ENCODE measurements at regions of chr1 and their contacts with region 1.

Region 1: GRCh38 chr1:39129514-39129913 is 75.0 kb upstream of the MACF1 start:
- DNase-seq: peak; percentile 12
- H3K4me3 Mint-ChIP-seq: no peak overlapping the region
- H3K27ac Mint-ChIP-seq: no peak overlapping the region
- H3K4me1 Mint-ChIP-seq: peaks cover 3% of the 10 kb centered on the region
- H3K27me3 Mint-ChIP-seq: peaks cover 2% of the 10 kb centered on the region

Region 2: DNA sequence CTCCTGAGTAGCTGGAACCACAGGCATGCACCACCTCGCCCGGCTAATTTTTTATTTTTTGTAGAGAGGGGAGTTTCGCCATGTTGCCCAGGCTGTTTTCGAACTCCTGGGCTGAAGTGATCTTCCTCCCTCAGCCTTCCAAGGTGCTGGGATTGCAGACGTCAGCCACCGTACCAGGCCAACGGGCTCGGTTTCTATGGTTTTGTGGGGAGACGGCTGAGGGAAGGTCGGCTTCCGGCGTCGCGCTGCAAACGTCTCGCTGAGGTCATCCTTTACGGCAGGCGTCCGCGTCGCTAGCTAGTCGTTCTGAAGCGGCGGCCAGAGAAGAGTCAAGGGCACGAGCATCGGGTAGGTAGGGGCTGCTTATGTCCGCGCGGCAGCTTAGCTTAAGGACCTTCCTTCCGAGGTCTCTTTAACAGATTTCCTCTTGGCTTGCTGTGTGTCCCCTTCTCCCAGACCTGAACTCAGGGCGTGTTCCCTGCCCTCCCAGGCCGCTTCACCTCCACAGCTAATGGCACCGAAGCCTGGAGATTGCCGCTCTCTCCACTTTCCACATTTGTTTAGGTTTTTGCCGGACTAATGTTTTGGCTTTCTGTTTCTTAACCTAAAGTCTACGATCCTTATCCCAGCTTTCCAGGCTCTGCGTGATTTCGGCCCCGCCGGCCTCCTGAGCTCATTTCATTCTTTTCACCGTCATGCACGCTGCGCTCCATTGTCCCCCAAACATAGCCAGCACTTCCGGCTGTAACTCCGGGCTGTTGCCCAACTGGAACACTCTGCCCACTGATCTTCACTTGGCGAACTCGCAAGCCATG is 103.3 kb before region 1 on chr1 and contains the start of gene NDUFS5:
- CTCF ChIA-PET with region 1: no interaction called
- intact Hi-C with region 1: no loop called
- DNase-seq: peak; percentile 92
- H3K4me3 Mint-ChIP-seq: peak within 1 kb of the TSS; percentile 98
- H3K27ac Mint-ChIP-seq: peak within 1 kb of the TSS; percentile 98
- H3K4me1 Mint-ChIP-seq: peaks cover 32% of the 10 kb centered on the region
- H3K27me3 Mint-ChIP-seq: no peaks in the 10 kb centered on the region
- total RNA-seq, gene NDUFS5: 226 TPM

Region 3: DNA sequence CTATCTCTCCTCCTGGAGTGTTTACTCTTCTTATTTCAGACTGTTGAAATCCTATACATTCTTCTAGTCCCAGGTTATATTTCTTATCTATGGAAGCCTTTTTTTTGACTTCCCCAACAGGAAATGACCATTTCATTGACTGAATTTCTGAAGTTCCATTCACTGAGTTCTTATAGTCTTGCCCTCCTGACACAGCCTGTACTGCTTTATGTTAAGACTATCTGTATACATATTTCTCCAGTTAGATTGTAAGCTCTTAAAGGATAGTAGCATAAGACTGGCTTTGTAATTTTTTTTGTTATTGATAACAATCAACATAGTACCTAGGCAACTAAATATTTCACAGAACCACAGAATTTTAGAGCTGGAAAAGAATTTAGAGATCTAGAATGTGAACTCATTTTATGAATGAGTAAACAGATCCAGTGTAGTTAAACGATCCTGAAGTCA is 60.1 kb after region 1 on chr1:
- CTCF ChIA-PET with region 1: interaction called, 4 read pairs
- intact Hi-C with region 1: loop called (anchors 2 kb)
- DNase-seq: no peak
- H3K4me3 Mint-ChIP-seq: no peak overlapping the region
- H3K27ac Mint-ChIP-seq: no peak overlapping the region
- H3K4me1 Mint-ChIP-seq: peaks cover 86% of the 10 kb centered on the region
- H3K27me3 Mint-ChIP-seq: no peaks in the 10 kb centered on the region